ENCODE measurements at regions of chr9 and their contacts with region 1.

Region 1: DNA sequence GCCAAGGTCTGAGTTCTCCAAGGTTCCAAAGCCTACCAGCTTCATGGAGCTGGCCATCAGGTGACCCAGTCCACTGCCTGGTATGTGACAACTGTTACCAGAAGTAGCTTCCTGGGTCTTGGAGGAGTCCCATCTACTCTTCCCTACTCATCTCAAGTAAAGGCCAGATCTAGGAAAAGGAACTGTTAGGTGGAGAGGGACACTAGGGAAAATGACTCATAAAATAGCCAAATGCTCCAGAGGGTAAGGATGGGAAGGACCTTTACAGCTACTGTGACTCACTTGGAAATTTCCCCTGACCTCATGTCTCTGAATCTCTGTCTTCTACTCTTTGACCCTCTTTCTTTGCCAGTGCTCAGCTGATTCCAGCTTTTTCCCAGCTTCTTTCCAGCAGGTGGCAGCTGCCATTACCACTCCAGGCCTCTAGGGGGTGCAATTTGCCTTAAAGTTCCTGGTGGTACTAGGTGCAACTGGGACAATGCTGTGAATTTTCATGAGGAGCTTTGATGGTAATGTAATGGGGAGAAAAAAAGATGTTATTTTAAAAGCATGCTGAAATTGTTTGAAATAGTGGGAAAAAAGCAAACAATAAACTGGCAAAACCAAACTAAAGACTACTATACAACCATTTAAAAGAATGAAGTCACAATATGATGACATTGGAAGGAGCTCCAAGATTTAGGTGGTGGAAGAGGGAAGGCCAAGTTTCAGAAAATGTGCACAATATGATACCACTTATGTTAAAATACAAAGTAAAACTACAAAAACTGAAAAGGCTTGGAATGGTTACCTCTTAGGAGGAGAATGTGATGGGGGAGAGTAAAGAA is 27.1 kb upstream of the MYORG start:
- DNase-seq: peak; percentile 69
- ATAC-seq: peak; percentile 45
- H3K4me3 Mint-ChIP-seq: no peak overlapping the region
- H3K27ac Mint-ChIP-seq: no peak overlapping the region
- H3K4me1 Mint-ChIP-seq: no peaks in the 10 kb centered on the region
- H3K27me3 Mint-ChIP-seq: no peaks in the 10 kb centered on the region
- CTCF ChIP-seq: peak; percentile 100

Region 2: GRCh38 chr9:34145165-34145564 is 258.6 kb before region 1 on chr9:
- CTCF ChIA-PET with region 1: no interaction called
- POLR2A ChIA-PET with region 1: no interaction called
- intact Hi-C with region 1: no loop called
- DNase-seq: no peak
- ATAC-seq: peak; percentile 45
- H3K4me3 Mint-ChIP-seq: no peak overlapping the region
- H3K27ac Mint-ChIP-seq: no peak overlapping the region
- H3K4me1 Mint-ChIP-seq: no peaks in the 10 kb centered on the region
- H3K27me3 Mint-ChIP-seq: no peaks in the 10 kb centered on the region
- CTCF ChIP-seq: no peak

Region 3: DNA sequence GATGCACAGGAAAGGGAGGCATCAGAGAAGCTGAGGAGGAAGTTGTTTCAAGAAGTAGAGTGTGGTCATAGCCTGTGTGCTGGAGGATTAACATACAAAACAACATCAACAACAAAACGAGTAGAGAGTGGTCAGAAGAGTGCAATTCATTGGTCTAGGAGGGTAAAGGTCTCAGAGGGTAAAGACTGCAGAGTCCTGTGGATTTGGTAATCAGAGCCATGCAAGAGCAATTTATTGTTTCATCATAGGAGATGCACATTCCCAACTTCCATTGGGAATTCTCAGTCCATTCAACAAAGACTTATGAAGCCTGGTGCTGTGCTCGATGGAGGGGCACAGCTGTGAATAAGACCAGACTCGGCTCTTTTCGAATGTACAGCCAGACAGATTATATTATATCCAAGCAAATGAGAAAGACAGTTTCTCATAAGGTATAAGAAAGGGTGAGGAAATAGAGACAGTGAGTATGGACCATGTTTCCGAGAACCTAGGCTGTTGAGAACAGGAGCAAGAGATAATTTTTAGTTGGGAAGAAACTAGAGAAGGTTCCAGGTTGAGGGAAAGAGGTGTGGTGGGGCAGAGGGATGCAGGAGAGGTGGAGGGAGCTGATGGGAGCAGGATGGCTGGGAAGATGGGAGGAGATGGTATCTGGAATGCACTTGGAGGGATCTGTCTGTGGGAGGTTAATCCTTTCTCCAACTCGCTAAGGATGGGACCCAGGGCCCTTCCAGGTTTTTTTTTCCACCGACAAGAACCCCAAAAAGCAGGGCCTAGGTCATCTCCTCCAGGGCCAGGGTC is 19.2 kb before region 1 on chr9:
- CTCF ChIA-PET with region 1: interaction called, 20 read pairs
- POLR2A ChIA-PET with region 1: no interaction called
- intact Hi-C with region 1: no loop called
- DNase-seq: no peak
- ATAC-seq: no peak
- H3K4me3 Mint-ChIP-seq: no peak overlapping the region
- H3K27ac Mint-ChIP-seq: no peak overlapping the region
- H3K4me1 Mint-ChIP-seq: peaks cover 13% of the 10 kb centered on the region
- H3K27me3 Mint-ChIP-seq: no peaks in the 10 kb centered on the region
- CTCF ChIP-seq: no peak

Region 4: DNA sequence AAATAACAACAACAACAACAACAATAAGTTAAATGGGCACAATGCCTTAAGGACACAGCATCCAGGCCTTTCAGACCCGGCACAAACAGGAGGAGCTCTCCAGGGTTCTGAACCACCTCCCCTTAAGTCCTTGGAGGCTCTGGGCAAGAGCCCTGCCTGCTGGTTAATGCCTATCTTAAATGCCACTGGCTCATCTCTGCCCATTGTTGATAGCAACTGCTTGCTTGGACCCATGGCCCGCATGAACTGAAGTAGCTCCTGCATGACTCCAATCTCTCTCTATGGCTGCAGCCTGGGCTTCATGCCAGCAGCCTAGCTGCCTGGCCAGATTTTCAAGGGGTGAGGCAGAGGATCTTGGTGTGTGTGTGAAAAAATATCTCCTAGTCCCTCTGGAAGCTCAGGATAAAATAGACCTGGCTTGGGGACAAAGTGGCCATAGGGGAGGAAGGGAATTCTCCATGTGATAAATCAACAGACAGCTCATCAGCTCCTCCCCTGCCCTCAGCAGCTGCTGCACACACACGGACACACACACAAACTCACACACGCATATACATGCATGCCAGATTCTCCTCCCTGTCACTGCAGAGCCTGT is 27.2 kb after region 1 on chr9:
- CTCF ChIA-PET with region 1: interaction called, 14 read pairs
- POLR2A ChIA-PET with region 1: interaction called, 3 read pairs
- intact Hi-C with region 1: no loop called
- DNase-seq: peak; percentile 52
- ATAC-seq: no peak
- H3K4me3 Mint-ChIP-seq: no peak overlapping the region
- H3K27ac Mint-ChIP-seq: no peak overlapping the region
- H3K4me1 Mint-ChIP-seq: no peaks in the 10 kb centered on the region
- H3K27me3 Mint-ChIP-seq: no peaks in the 10 kb centered on the region
- CTCF ChIP-seq: no peak

Region 5: GRCh38 chr9:34484682-34485081 is 80.9 kb after region 1 on chr9:
- CTCF ChIA-PET with region 1: interaction called, 10 read pairs
- POLR2A ChIA-PET with region 1: interaction called, 3 read pairs
- intact Hi-C with region 1: no loop called
- DNase-seq: no peak
- ATAC-seq: no peak
- H3K4me3 Mint-ChIP-seq: no peak overlapping the region
- H3K27ac Mint-ChIP-seq: no peak overlapping the region
- H3K4me1 Mint-ChIP-seq: no peaks in the 10 kb centered on the region
- H3K27me3 Mint-ChIP-seq: peaks cover 10% of the 10 kb centered on the region
- CTCF ChIP-seq: no peak

Region 6: GRCh38 chr9:34546834-34547827 is 143.4 kb after region 1 on chr9:
- CTCF ChIA-PET with region 1: interaction called, 10 read pairs
- POLR2A ChIA-PET with region 1: no interaction called
- intact Hi-C with region 1: no loop called
- DNase-seq: peak; percentile 89
- ATAC-seq: peak; percentile 83
- H3K4me3 Mint-ChIP-seq: no peak overlapping the region
- H3K27ac Mint-ChIP-seq: no peak overlapping the region
- H3K4me1 Mint-ChIP-seq: no peaks in the 10 kb centered on the region
- H3K27me3 Mint-ChIP-seq: peaks cover 15% of the 10 kb centered on the region
- CTCF ChIP-seq: peak; percentile 49

Measured in activated CD8-positive, alpha-beta T cell treated with anti-CD3 and anti-CD28 coated beads for 36 hours (primary cell).